PC-9 (cell line): ENCODE measurements at regions of chr9 and their contacts with region 1.

Region 1: GRCh38 chr9:112286926-112287325 is 46.5 kb downstream of the PTBP3 start:
- DNase-seq: no peak
- H3K4me3 ChIP-seq: no peak overlapping the region
- H3K27ac ChIP-seq: no peak overlapping the region
- H3K4me1 ChIP-seq: no peaks in the 10 kb centered on the region
- H3K27me3 ChIP-seq: no peaks in the 10 kb centered on the region
- CTCF ChIP-seq: no peak

Region 2: DNA sequence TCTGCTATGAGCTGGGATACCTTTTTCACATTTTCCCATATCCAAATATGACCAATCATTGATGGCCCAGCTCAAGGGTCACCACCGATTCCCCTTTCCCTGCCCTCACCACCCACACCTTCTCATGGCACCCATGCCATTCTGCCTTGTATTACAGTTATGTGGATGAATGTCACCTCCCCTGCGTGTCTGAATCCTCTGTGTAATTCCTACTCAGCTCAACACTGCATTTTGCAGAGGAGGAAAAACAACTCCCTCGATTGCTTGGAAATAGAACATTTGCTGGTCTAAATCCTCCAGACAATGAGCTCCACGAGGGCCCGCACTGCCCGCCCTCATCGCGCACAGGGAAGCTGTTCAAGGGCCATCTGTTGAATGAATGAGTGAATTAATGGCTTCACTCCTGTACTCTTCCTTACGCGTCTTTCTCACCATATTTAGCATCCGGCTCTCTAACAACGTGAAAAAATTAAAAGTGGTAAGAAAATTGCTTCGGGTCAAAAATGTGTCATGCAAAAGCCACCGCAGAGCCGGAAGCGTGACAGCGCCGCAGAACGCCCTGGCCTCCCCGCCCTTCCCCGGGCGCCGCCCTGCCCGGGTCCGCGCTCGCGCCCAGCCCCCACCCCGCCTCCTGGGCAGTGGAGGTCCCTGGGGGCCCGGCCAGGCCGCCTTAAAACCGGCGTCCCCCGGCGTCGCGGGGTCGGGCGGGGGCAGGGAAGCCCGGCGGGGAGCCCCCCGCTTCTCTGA is 112.5 kb before region 1 on chr9:
- CTCF ChIA-PET with region 1: interaction called, 12 read pairs
- POLR2A ChIA-PET with region 1: no interaction called
- intact Hi-C with region 1: no loop called
- DNase-seq: peak; percentile 81
- H3K4me3 ChIP-seq: peak overlapping the region; percentile 84; the same call in 1 of the 2 replicates
- H3K27ac ChIP-seq: peak overlapping the region; percentile 86
- H3K4me1 ChIP-seq: peaks cover 63% of the 10 kb centered on the region
- H3K27me3 ChIP-seq: no peaks in the 10 kb centered on the region
- CTCF ChIP-seq: no peak

Region 3: DNA sequence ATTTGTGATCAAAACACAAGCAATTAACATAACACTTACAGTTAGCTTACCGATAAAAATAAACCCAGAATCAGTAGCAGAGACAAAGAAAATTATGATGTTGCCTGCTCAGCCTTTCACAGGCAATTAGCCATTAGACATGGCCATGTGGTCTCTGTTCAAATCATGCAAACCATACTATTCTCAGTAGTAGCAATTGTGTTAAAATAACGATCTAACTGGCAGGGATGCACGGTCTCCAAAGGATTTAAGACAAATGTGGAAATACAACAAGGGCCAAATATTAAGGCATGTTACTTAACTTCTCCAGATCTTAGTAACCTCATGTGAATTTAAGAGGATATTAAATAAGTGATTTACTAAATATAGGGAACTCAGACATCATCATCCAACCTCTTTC is 13.1 kb before region 1 on chr9:
- CTCF ChIA-PET with region 1: no interaction called
- POLR2A ChIA-PET with region 1: no interaction called
- intact Hi-C with region 1: no loop called
- DNase-seq: no peak
- H3K4me3 ChIP-seq: no peak overlapping the region
- H3K27ac ChIP-seq: peak overlapping the region; percentile 75
- H3K4me1 ChIP-seq: peaks cover 40% of the 10 kb centered on the region
- H3K27me3 ChIP-seq: no peaks in the 10 kb centered on the region
- CTCF ChIP-seq: no peak